GM12878 (cell line): ENCODE measurements at regions of chr21 and their contacts with region 1.

Region 1: DNA sequence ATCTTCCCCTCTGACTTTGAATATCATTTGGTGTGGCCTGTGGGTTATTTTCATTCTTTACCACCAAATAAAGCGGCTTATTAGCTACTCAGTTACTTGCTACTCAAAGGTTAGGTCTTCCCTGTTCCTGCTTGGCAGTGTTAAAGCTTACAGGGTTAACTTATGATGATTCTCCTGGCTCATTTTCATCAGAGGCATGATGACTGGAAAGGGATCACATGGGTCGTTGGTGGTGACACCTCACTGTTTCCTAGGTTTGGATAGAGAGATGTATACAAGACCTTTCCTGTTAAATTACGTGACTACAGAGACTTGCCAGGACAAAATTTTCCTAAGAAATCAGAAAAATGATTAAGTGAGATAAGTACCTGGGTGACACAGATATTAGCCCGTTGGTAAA is 27.4 kb downstream of the MRPS6 start:
- DNase-seq: no peak
- ATAC-seq: no peak
- H3K4me3 ChIP-seq: no peak overlapping the region
- H3K27ac ChIP-seq: no peak overlapping the region
- H3K4me1 ChIP-seq: peaks cover 7% of the 10 kb centered on the region; the same call in 1 of the 2 replicates
- H3K27me3 ChIP-seq: no peaks in the 10 kb centered on the region
- CTCF ChIP-seq: no peak
- EP300 ChIP-seq: no peak
- POLR2A ChIP-seq: no peak
- RAD21 ChIP-seq: no peak

Region 2: GRCh38 chr21:33884376-33885171 is 216.2 kb before region 1 on chr21:
- CTCF ChIA-PET with region 1: no interaction called
- POLR2A ChIA-PET with region 1: no interaction called
- RAD21 ChIA-PET with region 1: no interaction called
- SMC1A ChIA-PET with region 1: no interaction called
- in situ Hi-C with region 1: no loop called
- intact Hi-C with region 1: no loop called
- DNase-seq: no peak
- ATAC-seq: no peak
- H3K4me3 ChIP-seq: no peak overlapping the region
- H3K27ac ChIP-seq: no peak overlapping the region
- H3K4me1 ChIP-seq: no peaks in the 10 kb centered on the region
- H3K27me3 ChIP-seq: peaks cover 0 to 6% of the 10 kb centered on the region in 2 experiments; a peak in 2 of 4 replicates
- CTCF ChIP-seq: no peak
- EP300 ChIP-seq: no peak
- POLR2A ChIP-seq: no peak
- RAD21 ChIP-seq: no peak

Region 3: DNA sequence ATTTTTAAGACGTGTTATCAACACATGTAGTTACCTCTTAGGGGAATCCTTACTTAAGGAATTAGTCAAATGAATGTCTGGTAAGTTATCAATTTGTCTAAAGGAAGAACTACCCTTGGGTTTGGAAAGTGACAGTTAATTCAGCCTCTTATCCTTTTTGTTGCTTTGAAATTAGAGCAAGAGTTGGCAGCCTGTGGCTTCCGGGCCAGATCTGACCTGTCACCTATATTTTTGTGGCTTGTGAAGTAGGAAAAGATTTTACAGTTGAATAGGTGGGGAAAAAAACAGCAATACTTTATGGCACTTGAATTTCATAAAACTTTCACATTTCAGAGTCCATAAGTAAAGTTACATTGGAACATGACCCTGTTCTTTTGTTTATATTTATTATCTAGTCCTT is 21.9 kb before region 1 on chr21:
- CTCF ChIA-PET with region 1: interaction called, 3 read pairs
- POLR2A ChIA-PET with region 1: interaction called, 3 read pairs
- RAD21 ChIA-PET with region 1: interaction called, 5 read pairs
- SMC1A ChIA-PET with region 1: interaction called, 6 read pairs
- in situ Hi-C with region 1: no loop called
- intact Hi-C with region 1: loop called (anchors 2 kb)
- DNase-seq: no peak
- ATAC-seq: peak; percentile 8; the same call in 2 of the 3 replicates
- H3K4me3 ChIP-seq: 0 out of 2 replicates have a peak overlapping the region, but pooled peaks have one; percentile 16
- H3K27ac ChIP-seq: 0 out of 2 replicates have a peak overlapping the region, but pooled peaks have one; percentile 9
- H3K4me1 ChIP-seq: peaks cover 32% of the 10 kb centered on the region
- H3K27me3 ChIP-seq: no peaks in the 10 kb centered on the region
- CTCF ChIP-seq: no peak
- EP300 ChIP-seq: no peak
- POLR2A ChIP-seq: no peak
- RAD21 ChIP-seq: no peak

Region 4: GRCh38 chr21:34187935-34188334 is 87.1 kb after region 1 on chr21:
- CTCF ChIA-PET with region 1: no interaction called
- POLR2A ChIA-PET with region 1: no interaction called
- RAD21 ChIA-PET with region 1: no interaction called
- SMC1A ChIA-PET with region 1: no interaction called
- in situ Hi-C with region 1: no loop called
- intact Hi-C with region 1: no loop called
- DNase-seq: no peak
- ATAC-seq: no peak
- H3K4me3 ChIP-seq: no peak overlapping the region
- H3K27ac ChIP-seq: no peak overlapping the region
- H3K4me1 ChIP-seq: peaks cover 4% of the 10 kb centered on the region
- H3K27me3 ChIP-seq: no peaks in the 10 kb centered on the region
- CTCF ChIP-seq: no peak
- EP300 ChIP-seq: no peak
- POLR2A ChIP-seq: no peak
- RAD21 ChIP-seq: no peak